Activated CD8-positive, alpha-beta T cell treated with anti-CD3 and anti-CD28 coated beads, Interleukin-2, amount 10 ng/mL, durations not matched to agents 7 days and 5 days (primary cell): ENCODE measurements at regions of chr21 and their contacts with region 1.

Region 1: GRCh38 chr21:42062236-42063022 is 8.7 kb upstream of the UMODL1 start:
- DNase-seq: peak; percentile 93
- ATAC-seq: peak; percentile 85
- H3K4me3 Mint-ChIP-seq: peak overlapping the region; percentile 81
- H3K27ac Mint-ChIP-seq: peak overlapping the region; percentile 96
- H3K4me1 Mint-ChIP-seq: peaks cover 56% of the 10 kb centered on the region
- H3K27me3 Mint-ChIP-seq: peaks cover 1% of the 10 kb centered on the region

Region 2: GRCh38 chr21:41832596-41833496 is 229.6 kb before region 1 on chr21:
- CTCF ChIA-PET with region 1: no interaction called
- POLR2A ChIA-PET with region 1: no interaction called
- DNase-seq: no peak
- ATAC-seq: no peak
- H3K4me3 Mint-ChIP-seq: no peak overlapping the region
- H3K27ac Mint-ChIP-seq: no peak overlapping the region
- H3K4me1 Mint-ChIP-seq: peaks cover 2% of the 10 kb centered on the region
- H3K27me3 Mint-ChIP-seq: no peaks in the 10 kb centered on the region

Region 3: GRCh38 chr21:41926117-41926806 is 136.2 kb before region 1 on chr21:
- CTCF ChIA-PET with region 1: no interaction called
- POLR2A ChIA-PET with region 1: interaction called, 10 read pairs
- DNase-seq: peak; percentile 65
- ATAC-seq: peak; percentile 94
- H3K4me3 Mint-ChIP-seq: peak overlapping the region; percentile 86
- H3K27ac Mint-ChIP-seq: peak overlapping the region; percentile 98
- H3K4me1 Mint-ChIP-seq: peaks cover 61% of the 10 kb centered on the region
- H3K27me3 Mint-ChIP-seq: no peaks in the 10 kb centered on the region

Region 4: GRCh38 chr21:41943851-41944250 is 118.6 kb before region 1 on chr21:
- CTCF ChIA-PET with region 1: no interaction called
- POLR2A ChIA-PET with region 1: no interaction called
- DNase-seq: no peak
- ATAC-seq: no peak
- H3K4me3 Mint-ChIP-seq: no peak overlapping the region
- H3K27ac Mint-ChIP-seq: no peak overlapping the region
- H3K4me1 Mint-ChIP-seq: no peaks in the 10 kb centered on the region
- H3K27me3 Mint-ChIP-seq: no peaks in the 10 kb centered on the region

Region 5: GRCh38 chr21:42009831-42010523 is 52.5 kb before region 1 on chr21 and contains the start of gene ZBTB21:
- CTCF ChIA-PET with region 1: interaction called, 4 read pairs
- POLR2A ChIA-PET with region 1: interaction called, 15 read pairs
- DNase-seq: peak; percentile 99
- ATAC-seq: peak; percentile 92
- H3K4me3 Mint-ChIP-seq: peak within 1 kb of the TSS; percentile 95
- H3K27ac Mint-ChIP-seq: peak within 1 kb of the TSS; percentile 99
- H3K4me1 Mint-ChIP-seq: peaks cover 22% of the 10 kb centered on the region
- H3K27me3 Mint-ChIP-seq: peaks cover 23% of the 10 kb centered on the region
- total RNA-seq, gene ZBTB21: 19.5 to 23.6 TPM